ENCODE measurements at regions of chr6 and their contacts with region 1.

Region 1: GRCh38 chr6:131683479-131683878 is 17.7 kb downstream of the OR2A4 start:
- DNase-seq: no peak
- ATAC-seq: peak; percentile 67
- H3K4me3 Mint-ChIP-seq: peak overlapping the region; percentile 69
- H3K27ac Mint-ChIP-seq: peak overlapping the region; percentile 86
- H3K4me1 Mint-ChIP-seq: peaks cover 60% of the 10 kb centered on the region
- H3K27me3 Mint-ChIP-seq: no peaks in the 10 kb centered on the region
- CTCF ChIP-seq: no peak

Region 2: DNA sequence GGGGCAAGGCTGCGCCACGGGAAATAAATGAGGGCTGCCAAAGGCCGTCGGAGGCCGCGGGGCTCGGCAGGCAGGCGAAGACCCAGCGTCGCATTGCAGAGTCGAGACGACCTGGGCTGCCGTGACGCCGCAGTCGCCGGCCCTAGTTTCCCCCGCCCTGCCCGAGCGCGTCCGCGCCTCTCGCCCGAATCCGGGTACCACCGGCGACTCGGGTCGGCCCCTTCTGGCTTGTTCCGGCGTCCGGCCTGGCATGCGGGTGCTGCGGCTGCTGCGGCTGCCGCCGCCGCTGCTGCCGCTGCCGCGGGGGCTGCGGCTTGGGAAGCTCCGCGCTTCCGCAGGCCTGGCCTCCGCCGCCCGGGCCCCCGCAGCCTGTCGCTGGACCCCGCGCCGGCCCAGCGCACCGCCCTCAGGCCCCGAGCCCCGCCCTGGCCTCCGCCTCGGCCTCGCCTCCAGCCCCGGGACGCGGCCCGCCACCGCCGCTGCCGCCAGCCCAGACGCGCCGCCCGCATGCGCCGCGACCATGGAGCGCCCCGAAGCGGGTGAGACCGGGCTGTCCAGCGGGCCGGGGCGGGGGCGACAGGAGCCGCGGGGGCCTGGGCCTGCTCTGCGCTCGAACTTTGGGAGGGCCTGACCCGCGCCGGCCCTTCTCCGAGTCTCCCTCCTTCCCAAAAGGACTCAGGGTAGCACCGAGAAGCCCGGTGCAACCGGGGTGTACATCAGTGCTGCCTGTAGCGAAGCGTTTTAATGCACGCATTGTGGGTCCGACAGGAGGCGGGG is 548.0 kb before region 1 on chr6 and contains the start of gene AKAP7:
- CTCF ChIA-PET with region 1: no interaction called
- POLR2A ChIA-PET with region 1: no interaction called
- intact Hi-C with region 1: loop called (anchors 5 kb)
- DNase-seq: peak; percentile 68
- ATAC-seq: peak; percentile 76
- H3K4me3 Mint-ChIP-seq: peak within 1 kb of the TSS; percentile 96
- H3K27ac Mint-ChIP-seq: peak within 1 kb of the TSS; percentile 95
- H3K4me1 Mint-ChIP-seq: peaks cover 26% of the 10 kb centered on the region
- H3K27me3 Mint-ChIP-seq: no peaks in the 10 kb centered on the region
- CTCF ChIP-seq: no peak
- total RNA-seq, gene AKAP7: 4.1 TPM in 2 replicates

Region 3: DNA sequence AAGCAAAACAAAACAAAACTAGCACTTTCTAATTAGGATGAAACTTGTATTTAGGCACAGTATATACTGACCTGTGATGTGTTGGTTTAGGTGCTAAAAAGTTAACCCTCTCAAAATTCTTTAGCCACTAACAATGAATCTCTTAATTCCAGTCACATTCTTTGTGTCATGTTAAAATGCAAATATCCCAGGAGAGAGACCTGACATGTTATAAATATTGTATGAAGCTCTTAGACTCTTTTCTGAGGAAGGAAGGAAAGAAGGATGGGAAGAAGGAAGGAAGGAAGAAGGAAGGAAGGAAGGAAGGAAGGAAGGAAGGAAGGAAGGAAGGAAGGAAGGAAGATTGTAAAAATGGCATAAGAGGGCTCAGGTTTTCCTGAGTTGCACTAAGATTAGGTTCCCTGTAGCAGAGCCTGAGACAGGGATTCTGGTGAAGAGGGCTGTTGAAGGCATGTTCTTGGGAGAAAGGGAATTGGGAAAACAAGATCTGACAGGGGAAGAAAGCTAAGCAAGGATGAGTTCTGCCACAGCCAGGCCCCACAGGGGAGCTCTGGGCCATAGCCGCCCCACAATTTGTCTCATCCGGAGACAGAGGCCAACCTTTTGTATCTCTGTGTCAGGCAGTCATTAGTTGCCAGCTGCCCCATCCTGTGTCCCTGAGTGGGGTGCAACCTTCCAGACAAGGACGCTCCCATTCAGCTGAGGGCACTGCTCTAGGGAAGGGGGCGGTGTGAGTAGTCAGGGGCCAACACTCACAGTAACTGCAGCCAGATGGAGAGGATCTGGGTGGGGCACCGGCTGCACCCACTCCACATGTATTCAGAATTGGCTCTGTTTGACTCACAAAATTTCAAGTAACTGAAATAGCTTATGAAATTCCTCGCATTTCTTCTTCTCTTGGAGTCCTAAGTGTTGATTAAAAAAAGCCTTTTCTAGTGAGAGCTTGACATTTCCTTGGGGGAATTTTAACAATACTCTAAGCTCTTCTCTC is 299.8 kb before region 1 on chr6:
- CTCF ChIA-PET with region 1: no interaction called
- POLR2A ChIA-PET with region 1: no interaction called
- intact Hi-C with region 1: no loop called
- DNase-seq: no peak
- ATAC-seq: no peak
- H3K4me3 Mint-ChIP-seq: no peak overlapping the region
- H3K27ac Mint-ChIP-seq: no peak overlapping the region
- H3K4me1 Mint-ChIP-seq: peaks cover 10% of the 10 kb centered on the region
- H3K27me3 Mint-ChIP-seq: peaks cover 10% of the 10 kb centered on the region
- CTCF ChIP-seq: no peak

Region 4: DNA sequence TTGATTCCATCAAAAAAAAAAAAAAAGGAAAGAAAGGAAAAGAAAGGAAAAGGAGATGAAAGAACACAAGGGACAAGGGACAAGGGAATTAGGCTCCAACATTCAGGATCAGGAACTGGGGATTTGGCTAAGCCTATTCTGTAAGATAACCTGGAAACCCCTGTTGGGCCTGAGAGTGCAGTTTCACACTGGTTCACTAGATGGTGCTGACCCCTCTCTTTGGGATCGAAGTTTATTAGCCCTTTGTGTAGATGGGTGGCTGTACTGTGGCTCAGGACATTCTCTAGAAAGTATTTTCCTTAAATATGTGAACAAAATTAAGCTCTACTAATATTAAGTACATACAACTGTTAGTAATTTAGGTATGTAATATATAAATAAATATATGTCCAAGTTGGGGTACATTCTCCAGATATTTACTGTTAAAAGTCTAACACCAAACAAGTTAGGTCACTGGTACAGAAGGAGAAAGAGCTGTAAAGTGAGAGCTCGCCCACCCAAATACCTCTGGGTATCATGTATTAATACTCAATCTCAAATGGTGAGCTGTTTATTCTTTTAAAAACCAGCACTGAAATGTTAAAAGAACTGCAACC is 11.4 kb after region 1 on chr6:
- CTCF ChIA-PET with region 1: interaction called, 6 read pairs
- POLR2A ChIA-PET with region 1: interaction called, 4 read pairs
- intact Hi-C with region 1: loop called (anchors 1 kb)
- DNase-seq: no peak
- ATAC-seq: peak; percentile 97
- H3K4me3 Mint-ChIP-seq: no peak overlapping the region
- H3K27ac Mint-ChIP-seq: no peak overlapping the region
- H3K4me1 Mint-ChIP-seq: peaks cover 23% of the 10 kb centered on the region
- H3K27me3 Mint-ChIP-seq: no peaks in the 10 kb centered on the region
- CTCF ChIP-seq: no peak

Region 5: DNA sequence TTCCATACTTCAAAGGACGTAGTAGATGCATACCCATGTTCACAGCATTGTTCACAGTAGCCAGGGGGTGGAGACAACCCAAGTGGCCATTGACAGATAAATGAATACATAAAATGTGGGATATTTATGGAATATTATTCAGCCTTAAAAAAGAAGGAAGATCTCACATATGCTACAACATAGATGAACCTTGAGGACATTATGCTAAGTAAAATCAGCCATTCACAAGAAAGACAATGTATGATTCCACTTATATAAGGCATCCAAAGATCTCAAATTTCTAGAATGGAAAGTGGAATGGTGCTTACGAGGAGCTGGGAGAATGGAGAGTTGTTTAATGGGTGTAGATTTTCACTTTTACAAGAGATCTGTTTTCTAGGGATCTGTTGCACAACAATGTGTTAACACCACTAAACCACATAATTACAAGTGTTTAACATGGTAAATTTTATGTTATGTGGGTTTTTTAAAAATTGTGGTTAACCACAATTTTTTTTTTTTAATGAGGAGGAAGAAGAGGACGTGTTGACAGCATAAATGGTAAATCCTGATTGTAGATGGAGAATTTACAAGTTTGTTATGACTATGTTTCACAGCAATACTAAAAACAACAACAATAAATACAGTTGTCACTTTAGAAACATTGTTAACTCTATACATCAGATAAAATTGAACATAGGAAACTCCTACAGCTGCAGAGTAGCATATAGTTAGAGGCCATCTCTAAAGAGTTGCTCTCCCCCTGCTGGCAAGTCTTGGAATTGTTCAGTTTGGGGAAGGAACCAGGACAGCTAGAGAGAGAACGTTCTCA is 226.1 kb after region 1 on chr6:
- CTCF ChIA-PET with region 1: interaction called, 4 read pairs
- POLR2A ChIA-PET with region 1: interaction called, 7 read pairs
- intact Hi-C with region 1: loop called (anchors 2 kb)
- DNase-seq: peak; percentile 36
- ATAC-seq: peak; percentile 96
- H3K4me3 Mint-ChIP-seq: no peak overlapping the region
- H3K27ac Mint-ChIP-seq: no peak overlapping the region
- H3K4me1 Mint-ChIP-seq: peaks cover 7% of the 10 kb centered on the region
- H3K27me3 Mint-ChIP-seq: peaks cover 23% of the 10 kb centered on the region
- CTCF ChIP-seq: peak; percentile 95

Region 6: DNA sequence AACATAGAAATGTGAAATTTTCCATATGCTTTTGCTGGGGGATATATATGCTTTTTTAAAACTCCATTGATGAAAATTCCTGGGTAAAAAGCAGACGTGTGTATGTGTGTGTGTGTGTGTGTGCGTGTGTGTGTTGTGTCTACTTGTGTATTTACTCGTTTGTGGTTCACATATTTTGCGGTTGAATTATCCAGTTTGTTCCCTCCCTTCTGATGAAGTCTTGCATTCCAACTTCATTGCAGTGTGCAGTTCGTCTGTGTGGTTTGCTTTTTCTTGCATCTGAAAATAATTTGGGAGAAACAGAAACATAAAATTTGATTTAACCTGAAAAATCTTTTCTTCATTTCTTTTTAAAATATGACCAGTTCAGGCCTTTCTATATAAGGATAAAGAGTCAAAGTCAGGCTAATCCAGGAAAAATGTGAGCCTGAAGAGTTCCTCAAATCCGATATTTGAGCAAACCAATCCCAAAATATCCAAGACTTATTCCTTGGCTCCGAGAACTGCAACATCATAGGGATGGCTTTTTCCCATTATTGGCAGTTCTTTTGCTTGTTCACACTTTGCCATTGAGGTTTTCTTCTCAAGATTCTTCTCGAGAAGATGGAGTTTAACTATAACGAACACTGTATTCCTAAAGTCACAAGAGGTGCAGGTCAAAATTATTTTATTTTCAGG is 469.9 kb after region 1 on chr6:
- CTCF ChIA-PET with region 1: no interaction called
- POLR2A ChIA-PET with region 1: no interaction called
- intact Hi-C with region 1: loop called (anchors 5 kb)
- DNase-seq: no peak
- ATAC-seq: no peak
- H3K4me3 Mint-ChIP-seq: no peak overlapping the region
- H3K27ac Mint-ChIP-seq: no peak overlapping the region
- H3K4me1 Mint-ChIP-seq: peaks cover 26% of the 10 kb centered on the region
- H3K27me3 Mint-ChIP-seq: no peaks in the 10 kb centered on the region
- CTCF ChIP-seq: no peak

Region 7: DNA sequence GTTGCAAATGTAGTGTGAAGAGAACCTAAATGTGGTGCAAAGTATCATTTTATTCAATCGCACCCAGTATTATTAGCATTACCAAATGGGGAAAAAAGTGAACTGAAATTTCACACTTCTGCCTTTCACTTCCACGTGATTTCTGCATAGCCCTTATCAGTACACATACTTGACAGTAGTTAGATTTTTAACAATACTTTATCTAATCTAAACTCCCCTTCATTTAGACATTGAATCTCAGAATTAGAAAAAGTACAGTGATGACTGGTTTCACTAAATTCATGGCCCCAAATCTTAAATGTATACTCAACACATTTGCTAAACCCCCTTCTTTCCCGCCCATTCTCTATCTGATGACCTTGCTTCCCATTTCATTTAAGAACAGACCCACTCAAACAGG is 815.2 kb after region 1 on chr6:
- CTCF ChIA-PET with region 1: no interaction called
- POLR2A ChIA-PET with region 1: no interaction called
- intact Hi-C with region 1: loop called (anchors 5 kb)
- DNase-seq: no peak
- ATAC-seq: peak; percentile 67
- H3K4me3 Mint-ChIP-seq: peak overlapping the region; percentile 55
- H3K27ac Mint-ChIP-seq: peak overlapping the region; percentile 92
- H3K4me1 Mint-ChIP-seq: peaks cover 90% of the 10 kb centered on the region
- H3K27me3 Mint-ChIP-seq: no peaks in the 10 kb centered on the region
- CTCF ChIP-seq: no peak

Measured in activated B cell treated with CpG ODN at 0.5 μM for 24 hours (primary cell).